T-cell (primary cell): ENCODE measurements at regions of chr11 and their contacts with region 1.

Region 1: GRCh38 chr11:62880803-62881578 is at the start of gene SLC3A2:
- DNase-seq: peak; percentile 71 to 93 (median 83)
- ATAC-seq: peak; percentile 80 to 83 (median 82)
- H3K4me3 ChIP-seq: peak within 1 kb of the TSS; percentile 94 to 97
- H3K4me3 Mint-ChIP-seq: peak within 1 kb of the TSS; percentile 97 to 100 (median 100)
- H3K27ac ChIP-seq: peak within 1 kb of the TSS; percentile 98
- H3K27ac Mint-ChIP-seq: peak within 1 kb of the TSS; percentile 100
- H3K4me1 ChIP-seq: peaks cover 12 to 48% of the 10 kb centered on the region in 2 experiments
- H3K4me1 Mint-ChIP-seq: peaks cover 46 to 55% (median 50%) of the 10 kb centered on the region in 3 donors
- H3K27me3 ChIP-seq: no peaks in the 10 kb centered on the region
- H3K27me3 Mint-ChIP-seq: no peaks in the 10 kb centered on the region
- total RNA-seq, gene SLC3A2: 178 to 248 (median 237) TPM

Region 2: DNA sequence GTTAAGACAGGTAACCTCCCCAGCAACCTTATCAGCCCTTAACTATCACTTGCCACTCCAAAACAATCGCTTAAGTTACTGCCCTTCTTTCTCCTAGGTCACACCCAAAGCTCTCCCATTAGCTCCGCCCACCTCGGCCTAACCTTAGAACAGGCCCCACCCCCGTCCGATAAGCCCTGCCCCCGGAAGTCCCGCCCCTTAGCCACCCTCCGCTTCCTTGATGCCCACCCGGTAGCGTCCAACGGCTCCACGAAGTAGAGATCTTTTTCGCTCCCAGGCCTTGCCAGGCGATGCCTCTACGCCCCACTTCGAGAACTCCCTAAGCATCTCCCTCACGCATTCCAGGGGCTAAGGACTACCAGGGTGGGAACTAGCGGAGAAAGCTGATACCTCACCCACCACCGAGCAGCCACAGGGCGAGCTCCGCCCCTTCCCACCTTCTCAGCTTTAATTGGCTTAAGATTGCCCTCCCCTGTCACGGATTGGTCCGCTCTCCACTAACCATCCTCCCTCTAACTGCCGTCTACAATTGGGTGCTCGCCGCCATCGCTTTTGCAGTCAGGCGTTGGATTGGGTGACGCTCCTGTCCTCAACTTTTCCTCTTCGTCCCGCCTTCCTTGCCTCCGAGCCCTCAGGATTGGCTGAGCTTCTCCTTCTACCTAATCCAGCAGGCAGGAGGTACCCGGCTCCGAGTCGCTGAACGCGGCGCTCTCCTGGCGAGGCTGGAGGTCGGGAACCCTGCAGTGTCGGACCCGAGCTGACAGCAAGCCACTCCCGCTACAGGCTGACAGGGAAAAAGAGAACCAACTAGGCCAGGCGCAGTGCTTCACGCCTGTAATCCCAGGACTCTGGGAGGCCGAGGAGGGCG is 127.0 kb before region 1 on chr11 and contains the start of gene ZBTB3:
- CTCF ChIA-PET with region 1: interaction called in 1 of 2 experiments, 17 read pairs
- POLR2A ChIA-PET with region 1: interaction called in 1 of 2 experiments, 6 read pairs
- DNase-seq: peak; percentile 92 to 99 (median 96)
- ATAC-seq: peak; percentile 94 to 95 (median 95)
- H3K4me3 ChIP-seq: peak within 1 kb of the TSS; percentile 81 to 88
- H3K4me3 Mint-ChIP-seq: peak within 1 kb of the TSS; percentile 83 to 97 (median 91)
- H3K27ac ChIP-seq: peak within 1 kb of the TSS; percentile 76
- H3K27ac Mint-ChIP-seq: peak within 1 kb of the TSS; percentile 96 to 99
- H3K4me1 ChIP-seq: peaks cover 4 to 37% of the 10 kb centered on the region in 2 experiments
- H3K4me1 Mint-ChIP-seq: peaks cover 15 to 30% (median 28%) of the 10 kb centered on the region in 3 donors
- H3K27me3 ChIP-seq: no peaks in the 10 kb centered on the region
- H3K27me3 Mint-ChIP-seq: no peaks in the 10 kb centered on the region
- total RNA-seq, gene ZBTB3: 5.9 to 24.6 (median 22.9) TPM

Region 3: DNA sequence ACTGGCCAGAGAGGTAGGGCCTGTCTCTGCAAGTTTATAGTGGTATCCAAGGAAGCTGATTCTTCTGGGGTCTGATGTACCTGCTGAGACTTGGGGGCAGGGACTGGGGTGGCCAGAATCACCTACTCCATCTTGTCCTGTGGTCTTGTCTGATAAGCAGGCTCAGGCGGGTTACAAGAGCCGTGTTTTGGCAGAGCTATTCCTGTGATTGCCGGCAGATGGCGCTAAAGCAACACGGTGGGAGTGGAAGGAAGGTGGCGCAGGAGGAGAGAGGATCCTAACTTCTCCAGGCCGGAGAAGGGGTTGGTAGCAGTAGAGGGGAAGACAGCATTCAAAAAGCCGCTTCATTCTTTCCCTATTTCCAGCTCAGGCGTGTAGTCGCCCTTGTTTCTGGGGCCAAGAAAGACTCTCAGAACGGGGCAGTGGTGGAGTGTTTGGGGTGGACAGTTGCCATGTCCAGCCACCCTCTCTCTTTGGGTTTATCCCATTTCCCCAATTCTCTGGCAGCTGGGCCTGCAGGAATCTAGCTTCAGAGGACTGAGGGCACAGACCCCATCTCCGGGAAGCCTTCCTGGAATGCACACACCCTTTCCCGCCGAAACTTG is 25.0 kb after region 1 on chr11:
- CTCF ChIA-PET with region 1: interaction called in 1 of 2 experiments, 11 read pairs
- POLR2A ChIA-PET with region 1: no interaction called
- DNase-seq: peak; percentile 25 to 86 (median 68)
- ATAC-seq: peak; percentile 70 to 76 (median 73)
- H3K4me3 ChIP-seq: no peak overlapping the region
- H3K4me3 Mint-ChIP-seq: no peak overlapping the region
- H3K27ac ChIP-seq: no peak overlapping the region
- H3K27ac Mint-ChIP-seq: no peak overlapping the region
- H3K4me1 ChIP-seq: peaks cover 0 to 5% of the 10 kb centered on the region in 2 experiments
- H3K4me1 Mint-ChIP-seq: peaks cover 0 to 2% (median 2%) of the 10 kb centered on the region in 3 donors
- H3K27me3 ChIP-seq: peaks cover 0 to 41% of the 10 kb centered on the region in 2 experiments
- H3K27me3 Mint-ChIP-seq: peaks cover 3 to 19% of the 10 kb centered on the region in 2 donors

Region 4: GRCh38 chr11:62948765-62949320 is 67.9 kb after region 1 on chr11:
- CTCF ChIA-PET with region 1: no interaction called
- POLR2A ChIA-PET with region 1: no interaction called
- DNase-seq: no peak
- ATAC-seq: no peak
- H3K4me3 ChIP-seq: no peak overlapping the region
- H3K4me3 Mint-ChIP-seq: no peak overlapping the region
- H3K27ac ChIP-seq: no peak overlapping the region
- H3K27ac Mint-ChIP-seq: no peak overlapping the region
- H3K4me1 ChIP-seq: no peaks in the 10 kb centered on the region
- H3K4me1 Mint-ChIP-seq: no peaks in the 10 kb centered on the region
- H3K27me3 ChIP-seq: peaks cover 0 to 30% of the 10 kb centered on the region in 2 experiments
- H3K27me3 Mint-ChIP-seq: peaks cover 21 to 41% of the 10 kb centered on the region in 2 donors

Region 5: GRCh38 chr11:63362196-63362793 is 481.3 kb after region 1 on chr11:
- CTCF ChIA-PET with region 1: no interaction called
- POLR2A ChIA-PET with region 1: no interaction called
- DNase-seq: no peak
- ATAC-seq: no peak
- H3K4me3 ChIP-seq: no peak overlapping the region
- H3K4me3 Mint-ChIP-seq: no peak overlapping the region
- H3K27ac ChIP-seq: no peak overlapping the region
- H3K27ac Mint-ChIP-seq: no peak overlapping the region
- H3K4me1 ChIP-seq: no peaks in the 10 kb centered on the region
- H3K4me1 Mint-ChIP-seq: no peaks in the 10 kb centered on the region
- H3K27me3 ChIP-seq: peaks cover 0 to 11% of the 10 kb centered on the region in 2 experiments
- H3K27me3 Mint-ChIP-seq: peaks cover 56 to 66% of the 10 kb centered on the region in 2 donors

Region 6: GRCh38 chr11:63811522-63811921 is 930.5 kb after region 1 on chr11:
- CTCF ChIA-PET with region 1: interaction called in 1 of 2 experiments, 10 read pairs
- POLR2A ChIA-PET with region 1: no interaction called
- DNase-seq: no peak
- ATAC-seq: no peak
- H3K4me3 ChIP-seq: no peak overlapping the region
- H3K4me3 Mint-ChIP-seq: peak overlapping the region in 1 of 3 donors; percentile 65
- H3K27ac ChIP-seq: no peak overlapping the region
- H3K27ac Mint-ChIP-seq: no peak overlapping the region
- H3K4me1 ChIP-seq: peaks cover 7 to 20% of the 10 kb centered on the region in 2 experiments
- H3K4me1 Mint-ChIP-seq: peaks cover 16 to 23% (median 23%) of the 10 kb centered on the region in 3 donors
- H3K27me3 ChIP-seq: no peaks in the 10 kb centered on the region
- H3K27me3 Mint-ChIP-seq: no peaks in the 10 kb centered on the region